K562 (cell line): ENCODE measurements at regions of chr16 and their contacts with region 1.

Region 1: GRCh38 chr16:81737885-81738786 is 41.0 kb upstream of the PLCG2 start:
- DNase-seq: peak; percentile 89 to 93 (median 90)
- ATAC-seq: peak; percentile 95
- H3K4me3 ChIP-seq: no peak overlapping the region
- H3K27ac ChIP-seq: no peak overlapping the region
- H3K4me1 ChIP-seq: peaks cover 17 to 18% of the 10 kb centered on the region in 2 experiments
- H3K27me3 ChIP-seq: peaks cover 0 to 4% of the 10 kb centered on the region in 2 experiments; a peak in 1 of 5 replicates
- CTCF ChIP-seq: peak; percentile 94 to 97 (median 96)
- EP300 ChIP-seq: no peak; the same call in 1 of the 2 replicates
- POLR2A ChIP-seq: no peak
- RAD21 ChIP-seq: peak; percentile 95 to 99

Region 2: DNA sequence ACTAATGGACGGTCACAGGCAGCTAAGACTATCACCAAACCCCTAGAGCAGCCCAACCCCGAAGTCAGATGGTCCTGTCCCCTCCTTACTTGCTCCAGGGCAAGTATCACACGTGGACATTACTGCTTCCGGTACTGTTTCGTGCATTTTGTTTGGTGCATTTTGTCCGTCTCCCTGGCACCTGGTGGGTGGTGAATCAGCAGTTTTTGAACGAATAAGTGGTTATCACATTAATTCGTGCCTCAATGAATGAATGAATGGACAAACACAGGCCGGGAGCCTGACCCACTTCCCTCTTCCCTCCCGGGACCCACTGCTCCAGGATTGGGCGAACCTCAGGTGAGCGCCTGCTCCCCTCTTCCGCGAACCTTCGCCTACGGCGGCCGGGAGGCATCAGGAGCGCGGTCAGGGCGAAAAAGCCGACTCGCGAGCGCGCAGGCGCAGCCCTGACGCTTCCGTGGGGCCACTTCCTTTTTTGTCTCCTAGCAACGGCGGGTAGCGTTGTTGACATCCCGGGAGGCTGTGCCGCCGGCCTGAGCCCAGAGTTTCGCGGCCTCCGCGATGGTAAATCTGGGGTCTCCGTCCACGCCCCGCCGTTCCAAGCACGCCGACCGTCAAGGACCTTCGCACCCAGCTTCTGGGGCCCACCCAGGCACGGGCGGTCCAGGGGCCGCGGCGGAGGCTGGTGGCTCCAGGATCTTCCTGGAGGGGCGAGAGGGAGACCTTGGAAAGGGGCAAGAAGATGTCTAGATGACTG is 1197.4 kb before region 1 on chr16 and contains the start of gene DYNLRB2:
- CTCF ChIA-PET with region 1: no interaction called
- POLR2A ChIA-PET with region 1: no interaction called
- in situ Hi-C with region 1: loop called (anchors 25 kb)
- intact Hi-C with region 1: no loop called
- DNase-seq: peak; percentile 80 to 89 (median 86)
- ATAC-seq: peak; percentile 99
- H3K4me3 ChIP-seq: peak within 1 kb of the TSS; percentile 28
- H3K27ac ChIP-seq: peak within 1 kb of the TSS; percentile 3; the same call in 1 of the 3 replicates
- H3K4me1 ChIP-seq: peaks cover 0 to 8% of the 10 kb centered on the region in 2 experiments; a peak in 2 of 5 replicates
- H3K27me3 ChIP-seq: no peaks in the 10 kb centered on the region
- CTCF ChIP-seq: no peak
- EP300 ChIP-seq: 0 out of 2 replicates have a peak, but pooled peaks have one; percentile 10
- POLR2A ChIP-seq: peak; percentile 60
- RAD21 ChIP-seq: no peak
- polyA plus RNA-seq, gene DYNLRB2: not detected

Region 3: GRCh38 chr16:80924372-80924978 is 813.7 kb before region 1 on chr16:
- CTCF ChIA-PET with region 1: no interaction called
- POLR2A ChIA-PET with region 1: no interaction called
- in situ Hi-C with region 1: no loop called
- intact Hi-C with region 1: loop called (anchors 5 kb)
- DNase-seq: peak; percentile 56 to 72 (median 62)
- ATAC-seq: peak; percentile 97
- H3K4me3 ChIP-seq: no peak overlapping the region
- H3K27ac ChIP-seq: no peak overlapping the region
- H3K4me1 ChIP-seq: no peaks in the 10 kb centered on the region
- H3K27me3 ChIP-seq: peaks cover 6 to 9% of the 10 kb centered on the region in 2 experiments; a peak in 4 of 5 replicates
- CTCF ChIP-seq: peak; percentile 77 to 90 (median 88)
- EP300 ChIP-seq: no peak
- POLR2A ChIP-seq: no peak
- RAD21 ChIP-seq: peak in 1 of 2 experiments; percentile 76; a peak in 2 of 4 replicates

Region 4: GRCh38 chr16:81204798-81205680 is 533.1 kb before region 1 on chr16:
- CTCF ChIA-PET with region 1: no interaction called
- POLR2A ChIA-PET with region 1: no interaction called
- in situ Hi-C with region 1: no loop called
- intact Hi-C with region 1: loop called (anchors 5 kb)
- DNase-seq: peak; percentile 52 to 65 (median 58)
- ATAC-seq: peak; percentile 82
- H3K4me3 ChIP-seq: no peak overlapping the region
- H3K27ac ChIP-seq: no peak overlapping the region
- H3K4me1 ChIP-seq: no peaks in the 10 kb centered on the region; a peak in 1 of 5 replicates
- H3K27me3 ChIP-seq: peaks cover 28 to 49% of the 10 kb centered on the region in 2 experiments; a peak in 4 of 5 replicates
- CTCF ChIP-seq: peak; percentile 75 to 76 (median 75)
- EP300 ChIP-seq: no peak
- POLR2A ChIP-seq: no peak
- RAD21 ChIP-seq: peak; percentile 50 to 63

Region 5: DNA sequence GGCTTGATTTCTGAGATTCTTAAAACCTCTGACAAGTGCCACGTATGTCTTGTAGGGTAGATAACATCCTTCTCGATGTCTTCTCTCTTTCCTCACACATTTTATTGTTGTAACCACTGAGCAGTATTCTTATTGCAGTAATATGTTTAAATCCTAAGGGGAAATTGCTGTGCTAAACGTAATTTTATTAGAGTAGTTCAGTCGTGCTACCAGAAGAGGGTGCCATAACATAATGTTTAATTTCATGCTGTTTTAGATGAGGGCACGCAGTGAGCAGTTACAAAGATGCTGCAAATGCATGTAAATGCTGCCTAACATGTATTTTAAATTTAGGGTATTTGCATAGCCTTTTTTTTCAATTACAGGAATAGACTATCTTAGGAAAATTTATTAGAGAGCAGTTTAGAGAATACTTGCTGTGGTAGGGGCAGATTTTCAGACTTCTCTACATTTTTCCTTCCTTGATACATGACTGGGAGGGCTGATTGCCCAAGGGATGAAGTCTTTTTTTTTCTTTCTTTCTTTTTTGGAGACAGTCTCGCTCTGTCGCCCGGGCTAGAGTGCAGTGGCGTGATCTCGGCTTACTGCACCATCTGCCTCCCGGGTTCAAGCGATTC is 371.7 kb before region 1 on chr16:
- CTCF ChIA-PET with region 1: interaction called, 31 read pairs
- POLR2A ChIA-PET with region 1: interaction called, 4 read pairs
- in situ Hi-C with region 1: no loop called
- intact Hi-C with region 1: loop called (anchors 5 kb)
- DNase-seq: peak; percentile 52 to 63 (median 60)
- ATAC-seq: peak; percentile 84
- H3K4me3 ChIP-seq: no peak overlapping the region
- H3K27ac ChIP-seq: no peak overlapping the region
- H3K4me1 ChIP-seq: no peaks in the 10 kb centered on the region
- H3K27me3 ChIP-seq: no peaks in the 10 kb centered on the region
- CTCF ChIP-seq: peak; percentile 70 to 89 (median 74)
- EP300 ChIP-seq: no peak
- POLR2A ChIP-seq: no peak
- RAD21 ChIP-seq: peak; percentile 86 to 92

Region 6: GRCh38 chr16:81623363-81624102 is 114.6 kb before region 1 on chr16:
- CTCF ChIA-PET with region 1: interaction called, 10 read pairs
- POLR2A ChIA-PET with region 1: no interaction called
- in situ Hi-C with region 1: no loop called
- intact Hi-C with region 1: no loop called
- DNase-seq: peak; percentile 51 to 81 (median 61)
- ATAC-seq: peak; percentile 32
- H3K4me3 ChIP-seq: no peak overlapping the region
- H3K27ac ChIP-seq: peak overlapping the region; percentile 3; the same call in 1 of the 3 replicates
- H3K4me1 ChIP-seq: peaks cover 35% of the 10 kb centered on the region in 2 experiments
- H3K27me3 ChIP-seq: no peaks in the 10 kb centered on the region
- CTCF ChIP-seq: peak; percentile 74 to 91 (median 82)
- EP300 ChIP-seq: no peak
- POLR2A ChIP-seq: no peak
- RAD21 ChIP-seq: peak; percentile 92 to 95